Endothelial cell of umbilical vein (primary cell): ENCODE measurements at regions of chr18 and their contacts with region 1.

Region 1: DNA sequence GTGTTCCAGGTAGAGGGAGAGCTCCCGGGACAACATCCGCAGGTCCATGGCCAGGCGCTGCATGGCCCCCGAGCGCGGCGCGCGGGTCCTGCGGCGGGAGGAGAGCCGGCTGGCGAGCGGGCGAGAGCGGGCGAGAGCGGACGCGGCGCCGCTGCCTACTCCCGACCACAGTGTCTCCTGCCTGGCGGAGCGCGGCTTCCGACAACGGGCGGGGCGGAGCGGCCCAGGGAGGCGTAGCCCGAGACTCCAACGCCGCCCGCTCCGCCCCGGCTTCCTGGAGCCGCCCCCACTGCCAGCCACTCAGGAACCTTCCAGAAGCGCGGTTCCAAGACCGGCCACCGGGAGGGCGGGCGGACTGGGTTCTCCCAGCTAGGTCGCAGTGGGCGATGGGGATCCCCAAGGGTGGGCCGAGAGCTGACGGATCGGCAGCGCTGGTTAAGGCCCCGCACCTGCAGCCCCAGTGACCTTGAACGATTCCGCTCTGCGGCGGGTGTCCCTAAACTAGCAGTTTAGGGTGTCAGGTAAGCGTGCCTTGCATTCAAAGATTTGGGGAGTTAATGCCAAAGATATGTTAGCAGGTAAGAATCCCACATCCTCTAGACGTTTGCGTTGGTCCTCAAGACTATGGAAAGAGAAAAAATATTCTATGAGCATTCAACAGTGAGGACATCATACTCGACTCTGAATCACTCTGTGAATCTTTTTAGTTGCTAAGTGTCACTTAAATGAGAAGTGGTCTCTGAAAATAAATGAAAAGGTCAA is at the start of gene ABHD3:
- DNase-seq: peak; percentile 88
- H3K4me3 ChIP-seq: peak within 1 kb of the TSS; percentile 71 to 94 (median 79)
- H3K27ac ChIP-seq: peak within 1 kb of the TSS; percentile 52
- H3K4me1 ChIP-seq: peaks cover 19% of the 10 kb centered on the region
- H3K27me3 ChIP-seq: no peaks in the 10 kb centered on the region
- CTCF ChIP-seq: peak; percentile 19 to 59
- POLR2A ChIP-seq: peak; percentile 79
- total RNA-seq, gene ABHD3: 10.0 and 14.9 TPM in 2 replicates

Region 2: DNA sequence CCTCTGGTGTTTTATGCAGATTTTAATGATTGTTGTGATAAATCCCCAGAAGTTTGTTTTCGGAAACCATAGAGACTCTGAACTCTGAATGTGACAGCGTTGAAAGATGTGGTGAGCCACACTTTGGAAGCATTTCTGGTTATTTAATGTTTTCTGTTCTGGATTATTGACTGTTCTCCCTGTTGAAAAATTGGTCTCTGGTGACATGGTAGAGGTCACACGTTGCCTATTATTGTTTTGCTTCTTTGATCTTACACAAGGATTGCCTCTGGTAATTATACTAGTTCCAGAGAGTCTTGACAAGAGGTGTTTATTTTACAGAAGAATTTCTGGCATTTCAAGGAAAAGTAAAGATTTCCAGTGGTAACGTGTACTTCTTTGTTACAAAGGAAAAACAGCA is 335.6 kb before region 1 on chr18:
- CTCF ChIA-PET with region 1: no interaction called
- POLR2A ChIA-PET with region 1: no interaction called
- dilution Hi-C with region 1: no loop called
- intact Hi-C with region 1: no loop called
- DNase-seq: no peak
- H3K4me3 ChIP-seq: no peak overlapping the region
- H3K27ac ChIP-seq: no peak overlapping the region
- H3K4me1 ChIP-seq: no peaks in the 10 kb centered on the region
- H3K27me3 ChIP-seq: no peaks in the 10 kb centered on the region
- CTCF ChIP-seq: no peak
- POLR2A ChIP-seq: no peak

Region 3: GRCh38 chr18:21600526-21601410 is 104.0 kb before region 1 on chr18 and contains the start of gene ESCO1:
- CTCF ChIA-PET with region 1: interaction called, 10 read pairs
- POLR2A ChIA-PET with region 1: interaction called, 11 read pairs
- dilution Hi-C with region 1: no loop called
- intact Hi-C with region 1: no loop called
- DNase-seq: peak; percentile 98
- H3K4me3 ChIP-seq: peak within 1 kb of the TSS; percentile 47 to 89 (median 68)
- H3K27ac ChIP-seq: peak within 1 kb of the TSS; percentile 59
- H3K4me1 ChIP-seq: no peaks in the 10 kb centered on the region
- H3K27me3 ChIP-seq: no peaks in the 10 kb centered on the region
- CTCF ChIP-seq: peak; percentile 97 to 99
- POLR2A ChIP-seq: peak; percentile 83
- total RNA-seq, gene ESCO1: 9.1 and 12.0 TPM in 2 replicates

Region 4: GRCh38 chr18:21612125-21612991 is 92.4 kb before region 1 on chr18 and contains the start of gene SNRPD1:
- CTCF ChIA-PET with region 1: no interaction called
- POLR2A ChIA-PET with region 1: no interaction called
- dilution Hi-C with region 1: no loop called
- intact Hi-C with region 1: loop called (anchors 1 kb)
- DNase-seq: peak; percentile 96
- H3K4me3 ChIP-seq: peak within 1 kb of the TSS; percentile 57 to 96 (median 86)
- H3K27ac ChIP-seq: peak within 1 kb of the TSS; percentile 90
- H3K4me1 ChIP-seq: peaks cover 20% of the 10 kb centered on the region
- H3K27me3 ChIP-seq: no peaks in the 10 kb centered on the region
- CTCF ChIP-seq: peak; percentile 97 to 98
- POLR2A ChIP-seq: peak; percentile 94
- total RNA-seq, gene SNRPD1: 91.6 and 97.3 TPM in 2 replicates

Region 5: DNA sequence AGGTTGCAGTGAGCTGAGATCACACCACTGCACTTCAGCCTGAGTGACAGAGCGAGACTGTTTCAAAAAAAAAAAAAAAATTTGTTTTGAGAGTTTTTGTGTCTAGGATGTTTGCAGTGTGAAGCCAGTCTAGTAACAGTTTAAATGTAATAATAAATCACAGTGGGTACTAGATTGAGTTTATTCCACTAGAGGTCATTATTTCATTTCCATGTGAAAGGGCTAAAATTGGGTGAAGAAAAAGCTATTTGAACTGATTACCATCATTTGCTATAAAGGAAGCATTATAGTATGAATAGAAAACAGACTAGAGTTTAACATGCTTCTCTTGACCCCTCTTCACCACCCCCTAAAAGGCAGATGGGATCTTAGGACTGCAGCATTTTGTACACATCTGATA is 72.4 kb before region 1 on chr18:
- CTCF ChIA-PET with region 1: interaction called, 5 read pairs
- POLR2A ChIA-PET with region 1: no interaction called
- dilution Hi-C with region 1: no loop called
- intact Hi-C with region 1: loop called (anchors 5 kb)
- DNase-seq: peak; percentile 23
- H3K4me3 ChIP-seq: no peak overlapping the region
- H3K27ac ChIP-seq: no peak overlapping the region
- H3K4me1 ChIP-seq: peaks cover 7% of the 10 kb centered on the region
- H3K27me3 ChIP-seq: no peaks in the 10 kb centered on the region
- CTCF ChIP-seq: no peak
- POLR2A ChIP-seq: no peak

Region 6: GRCh38 chr18:21656402-21656801 is 48.4 kb before region 1 on chr18:
- CTCF ChIA-PET with region 1: no interaction called
- POLR2A ChIA-PET with region 1: no interaction called
- dilution Hi-C with region 1: no loop called
- intact Hi-C with region 1: loop called (anchors 5 kb)
- DNase-seq: peak; percentile 71
- H3K4me3 ChIP-seq: peak overlapping the region in 1 of 3 experiments; percentile 32
- H3K27ac ChIP-seq: peak overlapping the region; percentile 66
- H3K4me1 ChIP-seq: peaks cover 12% of the 10 kb centered on the region
- H3K27me3 ChIP-seq: no peaks in the 10 kb centered on the region
- CTCF ChIP-seq: no peak
- POLR2A ChIP-seq: no peak

Region 7: DNA sequence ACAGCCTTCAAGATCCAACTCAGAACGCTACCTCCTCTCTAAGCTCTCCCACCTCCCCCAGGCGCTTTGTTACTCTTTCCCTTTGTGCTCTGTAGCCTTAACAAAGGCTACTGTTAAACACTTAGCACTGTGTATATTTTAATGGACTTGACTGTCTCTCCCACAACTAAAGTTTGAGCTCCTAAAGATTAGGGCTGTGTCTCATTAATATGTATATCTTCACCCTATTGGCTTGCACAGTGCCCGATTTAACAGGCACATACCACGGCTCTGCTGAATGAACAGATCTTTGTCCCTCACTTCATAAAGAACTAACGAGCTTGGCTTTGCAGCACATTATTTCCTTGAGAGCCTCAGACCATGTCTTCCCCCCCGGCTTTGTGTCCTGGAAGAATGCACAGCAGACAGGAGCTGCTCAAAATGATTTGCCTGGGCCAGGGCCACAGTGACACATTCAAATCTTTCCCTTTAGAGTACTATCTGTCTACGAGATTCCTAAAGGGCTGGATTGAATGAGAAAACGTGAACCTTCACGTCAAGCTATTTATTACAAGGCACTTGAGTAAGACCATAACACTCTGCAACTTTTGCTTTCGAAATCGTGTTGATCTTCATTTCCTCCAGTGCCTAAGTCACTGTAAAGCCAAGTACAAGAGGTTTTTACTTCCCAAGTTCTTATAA is 22.3 kb before region 1 on chr18:
- CTCF ChIA-PET with region 1: interaction called, 5 read pairs
- POLR2A ChIA-PET with region 1: no interaction called
- dilution Hi-C with region 1: no loop called
- intact Hi-C with region 1: loop called (anchors 2 kb)
- DNase-seq: peak; percentile 74
- H3K4me3 ChIP-seq: peak overlapping the region in 1 of 3 experiments; percentile 40
- H3K27ac ChIP-seq: peak overlapping the region; percentile 48
- H3K4me1 ChIP-seq: peaks cover 12% of the 10 kb centered on the region
- H3K27me3 ChIP-seq: no peaks in the 10 kb centered on the region
- CTCF ChIP-seq: no peak
- POLR2A ChIP-seq: no peak

Region 8: DNA sequence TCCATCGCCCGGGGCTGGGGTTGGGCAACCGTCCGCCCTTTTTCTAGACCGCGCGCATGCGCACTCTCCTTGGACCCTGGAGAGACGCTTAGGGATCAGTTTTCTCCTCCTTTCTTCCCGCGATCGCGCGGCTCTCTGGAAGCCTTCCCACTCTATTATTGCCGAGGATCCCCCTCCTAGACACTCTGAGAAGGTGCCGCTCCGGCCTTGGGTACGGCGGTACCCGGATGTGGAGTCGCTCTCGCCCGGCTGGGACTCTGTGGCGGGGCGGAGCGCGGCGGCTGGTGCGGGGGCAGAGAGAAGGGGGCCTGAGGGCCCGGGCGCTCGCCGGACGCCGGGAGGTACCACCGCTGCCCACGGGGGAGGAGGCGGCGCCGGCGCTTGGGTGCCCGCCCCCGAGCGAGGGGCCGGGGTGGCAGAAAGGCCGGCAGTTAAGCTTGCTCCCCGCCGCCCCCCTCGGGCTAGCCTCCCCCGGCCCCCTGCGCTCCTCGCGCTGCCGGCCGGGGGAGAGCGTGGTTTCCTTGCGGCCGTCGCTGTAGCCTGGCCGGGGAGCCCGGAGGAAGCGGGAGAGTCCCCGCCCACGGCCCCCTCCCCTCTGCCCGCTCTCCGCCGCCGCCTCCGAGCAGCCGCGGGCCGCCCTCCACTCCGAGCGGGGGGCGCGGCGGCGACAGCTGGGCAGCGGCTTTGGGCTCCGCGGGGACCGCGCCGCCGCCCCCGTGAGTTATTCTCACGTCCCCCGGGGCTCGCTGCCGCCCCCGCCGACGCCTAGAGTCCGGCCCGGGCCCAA is 36.1 kb after region 1 on chr18 and contains the start of gene MIB1:
- CTCF ChIA-PET with region 1: interaction called, 12 read pairs
- POLR2A ChIA-PET with region 1: interaction called, 11 read pairs
- dilution Hi-C with region 1: no loop called
- intact Hi-C with region 1: loop called (anchors 1 kb)
- DNase-seq: no peak
- H3K4me3 ChIP-seq: peak within 1 kb of the TSS; percentile 78 to 99 (median 79)
- H3K27ac ChIP-seq: peak within 1 kb of the TSS; percentile 91
- H3K4me1 ChIP-seq: peaks cover 23% of the 10 kb centered on the region
- H3K27me3 ChIP-seq: no peaks in the 10 kb centered on the region
- CTCF ChIP-seq: no peak
- POLR2A ChIP-seq: peak; percentile 42
- total RNA-seq, gene MIB1: 37.5 and 40.6 TPM in 2 replicates